HCT116 (cell line): ENCODE measurements at regions of chr16 and their contacts with region 1.

Region 1: GRCh38 chr16:68512183-68512582 is 26.9 kb upstream of the ZFP90 start:
- DNase-seq: no peak
- ATAC-seq: no peak
- H3K4me3 ChIP-seq: no peak overlapping the region
- H3K27ac ChIP-seq: no peak overlapping the region
- H3K4me1 ChIP-seq: peaks cover 0 to 6% of the 10 kb centered on the region in 2 experiments; a peak in 1 of 4 replicates
- H3K27me3 ChIP-seq: no peaks in the 10 kb centered on the region
- CTCF ChIP-seq: no peak
- POLR2A ChIP-seq: no peak
- RAD21 ChIP-seq: no peak

Region 2: DNA sequence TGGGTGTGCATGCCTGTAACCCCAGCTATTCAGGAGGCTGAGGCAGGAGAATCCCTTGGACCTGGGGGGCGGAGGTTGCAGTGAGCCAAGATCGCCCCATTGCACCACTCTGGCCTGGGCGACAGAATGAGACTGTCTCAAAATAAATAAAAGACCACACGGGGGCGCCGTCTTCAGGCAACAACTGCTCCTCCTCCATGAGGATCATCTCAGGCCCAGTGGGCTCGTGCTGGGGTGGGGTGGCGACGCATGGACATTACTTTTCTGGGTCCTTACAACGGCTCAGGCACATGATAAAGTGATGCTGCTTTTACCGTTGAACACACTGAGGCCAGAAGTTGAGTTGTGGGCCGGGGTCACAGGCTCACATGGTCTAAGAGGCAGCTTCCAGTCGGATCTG is 145.2 kb before region 1 on chr16:
- CTCF ChIA-PET with region 1: no interaction called
- POLR2A ChIA-PET with region 1: no interaction called
- RAD21 ChIA-PET with region 1: no interaction called
- intact Hi-C with region 1: loop called (anchors 1 kb)
- DNase-seq: peak; percentile 16
- ATAC-seq: peak; percentile 83
- H3K4me3 ChIP-seq: no peak overlapping the region
- H3K27ac ChIP-seq: no peak overlapping the region
- H3K4me1 ChIP-seq: peaks cover 0 to 6% of the 10 kb centered on the region in 2 experiments; a peak in 1 of 4 replicates
- H3K27me3 ChIP-seq: no peaks in the 10 kb centered on the region
- CTCF ChIP-seq: peak; percentile 23 to 66 (median 48); a peak in 5 of 6 replicates
- POLR2A ChIP-seq: no peak
- RAD21 ChIP-seq: peak; percentile 63

Region 3: GRCh38 chr16:68396481-68396880 is 115.7 kb before region 1 on chr16:
- CTCF ChIA-PET with region 1: interaction called, 27 read pairs
- POLR2A ChIA-PET with region 1: no interaction called
- RAD21 ChIA-PET with region 1: no interaction called
- intact Hi-C with region 1: loop called (anchors 1 kb)
- DNase-seq: peak; percentile 44
- ATAC-seq: peak; percentile 84
- H3K4me3 ChIP-seq: no peak overlapping the region
- H3K27ac ChIP-seq: no peak overlapping the region
- H3K4me1 ChIP-seq: peaks cover 0 to 16% of the 10 kb centered on the region in 2 experiments; a peak in 2 of 4 replicates
- H3K27me3 ChIP-seq: no peaks in the 10 kb centered on the region
- CTCF ChIP-seq: peak; percentile 68 to 96 (median 73)
- POLR2A ChIP-seq: no peak
- RAD21 ChIP-seq: peak; percentile 73

Region 4: GRCh38 chr16:68445458-68445857 is 66.7 kb before region 1 on chr16:
- CTCF ChIA-PET with region 1: no interaction called
- POLR2A ChIA-PET with region 1: no interaction called
- RAD21 ChIA-PET with region 1: no interaction called
- intact Hi-C with region 1: loop called (anchors 1 kb)
- DNase-seq: peak; percentile 43
- ATAC-seq: peak; percentile 71
- H3K4me3 ChIP-seq: no peak overlapping the region
- H3K27ac ChIP-seq: no peak overlapping the region
- H3K4me1 ChIP-seq: no peaks in the 10 kb centered on the region
- H3K27me3 ChIP-seq: peaks cover 31% of the 10 kb centered on the region
- CTCF ChIP-seq: peak; percentile 87 to 93 (median 88)
- POLR2A ChIP-seq: no peak
- RAD21 ChIP-seq: peak; percentile 79